Left lung (tissue), 14 donors: ENCODE measurements at regions of chr15 and their contacts with region 1.

Region 1: GRCh38 chr15:85296615-85297402 is 83.6 kb upstream of the AKAP13 start:
- DNase-seq: peak in 3 of 4 donors; percentile 52 to 80 (median 76)
- ATAC-seq: peak; percentile 97
- H3K4me3 ChIP-seq: no peak overlapping the region
- H3K27ac ChIP-seq: peak overlapping the region in 1 of 2 donors; percentile 21
- H3K4me1 ChIP-seq: peaks cover 0 to 12% of the 10 kb centered on the region in 2 donors
- H3K27me3 ChIP-seq: no peaks in the 10 kb centered on the region
- CTCF ChIP-seq: peak; percentile 65 to 74

Region 2: GRCh38 chr15:85010386-85011159 is 286.2 kb before region 1 on chr15:
- intact Hi-C with region 1: no loop called
- DNase-seq: peak in 2 of 4 donors; percentile 19 to 54
- ATAC-seq: peak; percentile 10
- H3K4me3 ChIP-seq: no peak overlapping the region
- H3K27ac ChIP-seq: peak overlapping the region; percentile 34 to 59
- H3K4me1 ChIP-seq: peaks cover 27 to 55% of the 10 kb centered on the region in 2 donors
- H3K27me3 ChIP-seq: no peaks in the 10 kb centered on the region
- CTCF ChIP-seq: no peak

Region 3: GRCh38 chr15:85094685-85095084 is 202.1 kb before region 1 on chr15:
- intact Hi-C with region 1: no loop called
- DNase-seq: no peak
- ATAC-seq: no peak
- H3K4me3 ChIP-seq: no peak overlapping the region
- H3K27ac ChIP-seq: no peak overlapping the region
- H3K4me1 ChIP-seq: no peaks in the 10 kb centered on the region
- H3K27me3 ChIP-seq: no peaks in the 10 kb centered on the region
- CTCF ChIP-seq: no peak

Region 4: GRCh38 chr15:85367741-85368140 is 70.9 kb after region 1 on chr15:
- intact Hi-C with region 1: no loop called
- DNase-seq: no peak
- ATAC-seq: no peak
- H3K4me3 ChIP-seq: no peak overlapping the region
- H3K27ac ChIP-seq: no peak overlapping the region
- H3K4me1 ChIP-seq: no peaks in the 10 kb centered on the region
- H3K27me3 ChIP-seq: no peaks in the 10 kb centered on the region
- CTCF ChIP-seq: no peak

Region 5: DNA sequence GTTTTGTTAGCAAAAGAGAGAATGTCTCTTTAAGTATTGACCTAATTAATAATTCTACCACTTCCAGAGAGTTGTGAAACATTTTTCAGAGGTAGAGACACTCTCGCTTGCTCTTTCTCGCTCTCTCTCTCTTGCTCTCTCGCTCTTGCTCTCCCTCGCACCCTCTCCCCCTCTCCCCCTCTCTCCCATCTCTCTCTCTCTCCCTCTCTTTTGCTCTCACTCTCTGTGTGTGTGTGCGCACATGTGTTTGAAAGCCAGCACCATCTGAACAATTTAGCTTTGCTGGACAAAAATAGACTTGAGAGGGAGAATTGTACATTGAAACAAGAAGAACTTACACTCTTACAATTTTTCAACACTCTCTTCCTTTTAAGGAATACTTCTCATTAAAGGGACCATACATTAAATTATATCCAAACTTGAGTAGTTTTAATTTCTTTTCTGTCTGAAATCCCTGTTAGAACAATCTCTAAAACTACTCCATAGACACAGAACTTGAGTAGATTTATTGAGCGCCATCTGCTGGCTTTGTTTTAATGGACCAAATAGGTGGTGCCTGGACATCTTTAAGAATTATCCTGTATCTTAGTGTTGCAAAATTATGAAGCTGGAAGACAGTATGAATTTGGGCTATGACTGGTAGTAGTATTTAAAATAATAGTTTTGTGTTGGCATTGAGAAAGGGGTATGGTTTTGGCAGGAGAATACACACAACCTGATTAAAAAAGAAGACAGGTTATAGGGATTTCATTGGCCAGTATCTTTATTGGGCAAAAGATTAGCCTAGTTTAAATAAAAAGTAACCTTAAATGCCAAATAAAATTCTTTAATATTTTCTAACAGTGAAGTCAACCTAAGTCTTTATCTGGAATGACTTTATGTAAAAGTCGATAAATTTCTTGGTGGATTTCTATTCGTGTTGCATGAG is 208.2 kb after region 1 on chr15:
- intact Hi-C with region 1: loop called in 1 of 2 experiments (anchors 10 kb)
- DNase-seq: peak in 2 of 4 donors; percentile 59 to 68
- ATAC-seq: peak; percentile 84
- H3K4me3 ChIP-seq: no peak overlapping the region
- H3K27ac ChIP-seq: peak overlapping the region; percentile 41 to 49
- H3K4me1 ChIP-seq: peaks cover 4 to 30% of the 10 kb centered on the region in 2 donors
- H3K27me3 ChIP-seq: no peaks in the 10 kb centered on the region
- CTCF ChIP-seq: peak; percentile 47 to 50